K562 (cell line): ENCODE measurements at regions of chr10 and their contacts with region 1.

Region 1: GRCh38 chr10:70461215-70461986 is 17.2 kb upstream of the PALD1 start:
- DNase-seq: peak; percentile 81 to 86 (median 83)
- ATAC-seq: peak; percentile 90
- H3K4me3 ChIP-seq: no peak overlapping the region
- H3K27ac ChIP-seq: no peak overlapping the region
- H3K4me1 ChIP-seq: peaks cover 5 to 15% of the 10 kb centered on the region in 2 experiments; a peak in 3 of 5 replicates
- H3K27me3 ChIP-seq: peaks cover 49 to 73% of the 10 kb centered on the region in 2 experiments
- CTCF ChIP-seq: peak; percentile 92 to 95 (median 94)
- EP300 ChIP-seq: no peak
- POLR2A ChIP-seq: no peak
- RAD21 ChIP-seq: peak; percentile 84 to 95

Region 2: GRCh38 chr10:70381471-70382421 is 79.7 kb before region 1 on chr10:
- CTCF ChIA-PET with region 1: no interaction called
- POLR2A ChIA-PET with region 1: no interaction called
- in situ Hi-C with region 1: no loop called
- intact Hi-C with region 1: loop called (anchors 5 kb)
- DNase-seq: peak; percentile 45 to 72 (median 59)
- ATAC-seq: peak; percentile 51
- H3K4me3 ChIP-seq: peak overlapping the region; percentile 66
- H3K27ac ChIP-seq: peak overlapping the region; percentile 31; the same call in 2 of the 3 replicates
- H3K4me1 ChIP-seq: peaks cover 12 to 22% of the 10 kb centered on the region in 2 experiments; a peak in 4 of 5 replicates
- H3K27me3 ChIP-seq: no peaks in the 10 kb centered on the region
- CTCF ChIP-seq: no peak
- EP300 ChIP-seq: no peak
- POLR2A ChIP-seq: no peak
- RAD21 ChIP-seq: peak in 1 of 2 experiments; percentile 8; a peak in 1 of 4 replicates

Region 3: DNA sequence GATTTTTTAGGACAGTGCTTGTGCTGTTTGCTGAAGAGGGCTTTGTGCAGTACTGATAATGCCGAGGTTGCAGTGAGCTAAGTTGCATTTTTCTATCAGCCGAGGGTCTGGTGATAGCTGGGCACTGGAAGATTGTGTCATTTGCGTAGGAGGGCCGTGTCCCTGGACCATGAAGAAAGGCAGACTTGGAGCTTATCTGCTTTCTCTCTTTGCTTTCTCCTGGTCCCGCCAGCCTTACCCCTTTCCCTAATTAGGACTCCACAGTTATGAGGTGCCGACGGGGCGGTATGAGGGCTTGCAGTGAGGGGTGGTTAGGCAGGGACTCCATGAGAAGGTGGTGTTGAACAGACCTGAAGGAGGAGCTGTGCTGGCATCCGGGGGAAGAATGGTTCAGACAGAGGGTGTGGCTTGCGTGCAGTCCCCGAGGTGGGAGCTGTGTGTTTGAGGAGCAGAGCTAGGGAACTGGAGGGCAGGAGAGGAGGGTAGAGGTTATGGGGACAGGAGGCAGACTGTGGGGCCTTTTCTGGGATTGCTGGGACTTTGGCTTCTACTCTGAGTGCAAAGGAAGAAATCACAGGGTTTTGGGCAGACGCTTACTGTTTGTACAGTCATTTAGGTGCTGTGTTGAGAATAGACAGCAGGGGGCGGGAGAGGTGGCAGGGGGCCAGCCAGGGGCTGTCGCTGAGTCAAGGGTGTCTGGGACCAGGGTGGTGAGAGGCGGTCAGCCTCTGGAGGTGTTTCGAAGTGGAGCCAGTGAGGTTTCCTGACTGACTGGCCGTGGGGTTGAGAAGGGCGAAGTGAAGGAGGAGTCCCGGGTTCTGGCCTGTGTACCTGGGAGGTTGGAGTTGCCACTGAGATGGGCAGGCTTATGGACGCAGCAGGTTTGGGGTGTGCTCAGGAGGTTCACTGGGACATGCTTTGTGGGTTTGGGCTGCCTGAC is 97.7 kb after region 1 on chr10:
- CTCF ChIA-PET with region 1: no interaction called
- POLR2A ChIA-PET with region 1: no interaction called
- in situ Hi-C with region 1: no loop called
- intact Hi-C with region 1: no loop called
- DNase-seq: peak; percentile 91 to 94 (median 93)
- ATAC-seq: peak; percentile 94
- H3K4me3 ChIP-seq: peak overlapping the region; percentile 31
- H3K27ac ChIP-seq: peak overlapping the region; percentile 76
- H3K4me1 ChIP-seq: peaks cover 25 to 54% of the 10 kb centered on the region in 2 experiments
- H3K27me3 ChIP-seq: no peaks in the 10 kb centered on the region
- CTCF ChIP-seq: peak; percentile 82 to 93 (median 88)
- EP300 ChIP-seq: peak; percentile 89
- POLR2A ChIP-seq: no peak
- RAD21 ChIP-seq: peak; percentile 83 to 87